Activated CD4-positive, alpha-beta T cell treated with anti-CD3 and anti-CD28 coated beads for 36 hours (primary cell): ENCODE measurements at regions of chr2 and their contacts with region 1.

Region 1: GRCh38 chr2:127064642-127065250 is 42.2 kb downstream of the BIN1 start:
- DNase-seq: peak; percentile 92
- ATAC-seq: peak; percentile 95
- H3K4me3 Mint-ChIP-seq: no peak overlapping the region
- H3K27ac Mint-ChIP-seq: peak overlapping the region; percentile 72
- H3K4me1 Mint-ChIP-seq: peaks cover 27% of the 10 kb centered on the region
- H3K27me3 Mint-ChIP-seq: no peaks in the 10 kb centered on the region

Region 2: GRCh38 chr2:126657636-126658318 is 407.0 kb before region 1 on chr2:
- CTCF ChIA-PET with region 1: interaction called, 5 read pairs
- POLR2A ChIA-PET with region 1: no interaction called
- intact Hi-C with region 1: loop called in 1 of 2 experiments (anchors 5 kb)
- DNase-seq: peak; percentile 87
- ATAC-seq: peak; percentile 67
- H3K4me3 Mint-ChIP-seq: peak overlapping the region; percentile 97
- H3K27ac Mint-ChIP-seq: peak overlapping the region; percentile 99
- H3K4me1 Mint-ChIP-seq: peaks cover 59% of the 10 kb centered on the region
- H3K27me3 Mint-ChIP-seq: no peaks in the 10 kb centered on the region

Region 3: GRCh38 chr2:127076924-127077323 is 12.2 kb after region 1 on chr2:
- CTCF ChIA-PET with region 1: interaction called, 14 read pairs
- POLR2A ChIA-PET with region 1: interaction called, 5 read pairs
- intact Hi-C with region 1: loop called (anchors 1 to 2 kb)
- DNase-seq: no peak
- ATAC-seq: no peak
- H3K4me3 Mint-ChIP-seq: no peak overlapping the region
- H3K27ac Mint-ChIP-seq: peak overlapping the region; percentile 80
- H3K4me1 Mint-ChIP-seq: peaks cover 46% of the 10 kb centered on the region
- H3K27me3 Mint-ChIP-seq: no peaks in the 10 kb centered on the region

Region 4: GRCh38 chr2:127081826-127082633 is 17.3 kb after region 1 on chr2:
- CTCF ChIA-PET with region 1: interaction called, 14 read pairs
- POLR2A ChIA-PET with region 1: interaction called, 5 read pairs
- intact Hi-C with region 1: loop called (anchors 1 to 2 kb)
- DNase-seq: peak; percentile 87
- ATAC-seq: peak; percentile 50
- H3K4me3 Mint-ChIP-seq: peak overlapping the region; percentile 82
- H3K27ac Mint-ChIP-seq: peak overlapping the region; percentile 91
- H3K4me1 Mint-ChIP-seq: peaks cover 75% of the 10 kb centered on the region
- H3K27me3 Mint-ChIP-seq: no peaks in the 10 kb centered on the region

Region 5: GRCh38 chr2:127106951-127107621 is 42.3 kb after region 1 on chr2 and contains the start of gene BIN1:
- CTCF ChIA-PET with region 1: interaction called, 7 read pairs
- POLR2A ChIA-PET with region 1: no interaction called
- intact Hi-C with region 1: loop called in 1 of 2 experiments (anchors 1 kb)
- DNase-seq: peak; percentile 84
- ATAC-seq: peak; percentile 94
- H3K4me3 Mint-ChIP-seq: peak within 1 kb of the TSS; percentile 69
- H3K27ac Mint-ChIP-seq: peak within 1 kb of the TSS; percentile 31
- H3K4me1 Mint-ChIP-seq: peaks cover 4% of the 10 kb centered on the region
- H3K27me3 Mint-ChIP-seq: peaks cover 19% of the 10 kb centered on the region
- total RNA-seq, gene BIN1: 65.2 to 71.0 TPM

Region 6: DNA sequence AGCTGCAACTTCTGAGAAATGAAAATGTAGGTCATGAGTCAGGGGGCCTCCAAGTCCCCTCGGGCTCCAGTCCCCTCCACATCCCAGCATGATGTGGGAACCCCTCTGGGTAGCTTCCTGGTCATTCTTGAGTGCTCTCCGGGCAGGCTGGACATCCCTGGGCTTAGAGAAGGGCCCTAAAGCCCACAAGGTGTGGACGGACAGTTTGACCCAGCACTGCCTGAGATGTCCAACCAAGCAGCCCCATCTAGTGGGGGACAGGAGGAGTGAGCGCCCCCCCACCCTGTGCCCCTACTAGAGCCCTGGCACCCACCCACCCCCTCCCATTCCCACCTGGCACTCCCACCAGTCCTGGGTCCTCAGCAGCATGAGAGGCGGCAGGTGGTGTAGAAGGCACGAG is 109.4 kb after region 1 on chr2:
- CTCF ChIA-PET with region 1: no interaction called
- POLR2A ChIA-PET with region 1: no interaction called
- intact Hi-C with region 1: loop called in 1 of 2 experiments (anchors 5 kb)
- DNase-seq: peak; percentile 27
- ATAC-seq: no peak
- H3K4me3 Mint-ChIP-seq: no peak overlapping the region
- H3K27ac Mint-ChIP-seq: no peak overlapping the region
- H3K4me1 Mint-ChIP-seq: no peaks in the 10 kb centered on the region
- H3K27me3 Mint-ChIP-seq: no peaks in the 10 kb centered on the region

Region 7: GRCh38 chr2:127293748-127294562 is 229.2 kb after region 1 on chr2 and contains the start of gene ERCC3:
- CTCF ChIA-PET with region 1: no interaction called
- POLR2A ChIA-PET with region 1: interaction called, 5 read pairs
- intact Hi-C with region 1: loop called in 1 of 2 experiments (anchors 1 kb)
- DNase-seq: peak; percentile 90
- ATAC-seq: peak; percentile 98
- H3K4me3 Mint-ChIP-seq: peak within 1 kb of the TSS; percentile 98
- H3K27ac Mint-ChIP-seq: peak within 1 kb of the TSS; percentile 100
- H3K4me1 Mint-ChIP-seq: peaks cover 20% of the 10 kb centered on the region
- H3K27me3 Mint-ChIP-seq: no peaks in the 10 kb centered on the region
- total RNA-seq, gene ERCC3: 49.5 to 49.8 TPM